Left ventricle myocardium inferior (tissue), 1 donor: ENCODE measurements at regions of chr10 and their contacts with region 1.

Region 1: DNA sequence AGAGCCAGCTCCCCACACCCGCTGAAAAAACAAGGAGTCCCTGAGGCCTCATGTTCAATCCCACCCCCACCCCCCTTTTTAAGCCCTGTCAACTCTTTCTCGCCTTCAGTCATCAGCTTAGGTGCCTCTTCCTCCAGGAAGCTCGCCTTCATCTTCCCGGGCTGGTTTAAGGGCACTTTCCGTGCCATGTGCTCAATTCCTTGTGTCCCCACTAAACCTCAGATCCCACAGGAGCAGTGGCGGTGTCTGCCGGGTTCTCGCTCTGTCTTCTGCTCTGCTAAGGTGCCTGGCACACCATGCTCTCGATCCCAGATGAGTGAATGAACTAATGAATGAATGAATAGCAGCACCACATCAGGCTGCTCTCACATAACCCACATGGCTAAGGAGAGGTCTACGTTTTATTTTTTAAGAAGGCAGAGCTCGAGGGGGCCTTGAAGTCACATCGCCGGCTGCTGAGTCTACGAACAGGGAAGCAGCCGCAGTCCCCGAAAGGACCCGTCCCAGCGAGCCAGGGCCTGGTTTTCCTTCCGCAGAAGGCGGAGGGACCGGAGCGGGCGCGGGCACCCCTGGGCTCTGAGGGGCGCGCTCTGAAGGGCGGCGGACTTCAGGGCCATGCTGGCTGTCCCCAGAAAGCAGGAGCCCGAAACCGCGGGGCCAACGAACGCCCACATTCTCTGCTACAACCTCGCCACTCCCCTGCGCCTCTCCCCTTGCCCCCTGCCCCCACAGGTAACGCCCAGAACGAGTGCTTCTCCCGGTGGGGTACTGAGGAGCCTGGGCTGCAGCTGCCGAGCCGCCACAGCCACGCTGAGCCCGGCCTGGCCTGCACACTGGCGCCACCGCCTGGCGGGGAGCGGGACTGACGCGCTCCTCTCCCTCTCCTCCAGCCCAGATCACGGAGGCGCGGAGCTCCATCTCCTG is 73.4 kb upstream of the KCNMA1 start:
- DNase-seq: peak; percentile 69
- H3K4me3 ChIP-seq: peak overlapping the region; percentile 63
- H3K27ac ChIP-seq: no peak overlapping the region
- H3K4me1 ChIP-seq: peaks cover 6% of the 10 kb centered on the region
- H3K27me3 ChIP-seq: peaks cover 70% of the 10 kb centered on the region
- CTCF ChIP-seq: peak; percentile 98

Region 2: DNA sequence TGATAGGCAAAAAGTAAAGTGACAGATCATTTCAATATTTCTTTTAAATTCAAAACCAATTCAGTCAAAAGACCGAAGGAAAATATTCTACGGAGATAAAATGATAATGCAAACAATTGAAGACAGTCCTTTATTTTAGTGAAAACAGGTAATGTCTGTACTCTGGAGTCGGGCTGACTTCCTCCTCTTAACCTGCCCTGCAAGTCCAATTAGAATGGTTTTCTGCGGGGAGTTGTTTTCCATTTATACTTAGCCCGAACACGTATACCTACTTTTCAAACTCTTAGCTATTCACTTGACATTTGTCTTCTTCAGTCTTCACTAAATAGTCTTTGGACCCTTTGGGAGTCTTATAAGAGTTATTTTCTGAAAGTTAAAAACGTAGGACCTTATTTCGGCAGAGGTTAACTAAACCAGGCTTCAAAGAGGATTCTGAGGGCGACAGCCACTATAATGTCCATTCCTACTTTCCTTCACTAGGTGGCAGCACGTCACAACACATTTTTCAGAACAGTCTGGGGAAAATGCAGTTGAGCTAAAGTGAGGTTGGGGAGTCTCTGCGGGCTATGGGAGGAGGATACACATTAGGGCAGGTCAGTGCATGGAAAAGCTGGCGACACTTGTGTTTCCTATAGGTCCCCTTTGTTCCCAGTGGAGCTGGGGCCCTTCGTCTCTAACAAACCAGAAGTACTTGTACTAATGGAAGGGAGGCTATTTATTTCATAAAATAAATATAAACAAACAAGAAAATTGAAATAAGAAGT is 545.4 kb before region 1 on chr10:
- intact Hi-C with region 1: loop called (anchors 10 kb)
- DNase-seq: no peak
- H3K4me3 ChIP-seq: no peak overlapping the region
- H3K27ac ChIP-seq: no peak overlapping the region
- H3K4me1 ChIP-seq: peaks cover 4% of the 10 kb centered on the region
- H3K27me3 ChIP-seq: peaks cover 39% of the 10 kb centered on the region
- CTCF ChIP-seq: peak; percentile 81